Heart right ventricle (tissue), 16 donors: ENCODE measurements at regions of chr22 and their contacts with region 1.

Region 1: DNA sequence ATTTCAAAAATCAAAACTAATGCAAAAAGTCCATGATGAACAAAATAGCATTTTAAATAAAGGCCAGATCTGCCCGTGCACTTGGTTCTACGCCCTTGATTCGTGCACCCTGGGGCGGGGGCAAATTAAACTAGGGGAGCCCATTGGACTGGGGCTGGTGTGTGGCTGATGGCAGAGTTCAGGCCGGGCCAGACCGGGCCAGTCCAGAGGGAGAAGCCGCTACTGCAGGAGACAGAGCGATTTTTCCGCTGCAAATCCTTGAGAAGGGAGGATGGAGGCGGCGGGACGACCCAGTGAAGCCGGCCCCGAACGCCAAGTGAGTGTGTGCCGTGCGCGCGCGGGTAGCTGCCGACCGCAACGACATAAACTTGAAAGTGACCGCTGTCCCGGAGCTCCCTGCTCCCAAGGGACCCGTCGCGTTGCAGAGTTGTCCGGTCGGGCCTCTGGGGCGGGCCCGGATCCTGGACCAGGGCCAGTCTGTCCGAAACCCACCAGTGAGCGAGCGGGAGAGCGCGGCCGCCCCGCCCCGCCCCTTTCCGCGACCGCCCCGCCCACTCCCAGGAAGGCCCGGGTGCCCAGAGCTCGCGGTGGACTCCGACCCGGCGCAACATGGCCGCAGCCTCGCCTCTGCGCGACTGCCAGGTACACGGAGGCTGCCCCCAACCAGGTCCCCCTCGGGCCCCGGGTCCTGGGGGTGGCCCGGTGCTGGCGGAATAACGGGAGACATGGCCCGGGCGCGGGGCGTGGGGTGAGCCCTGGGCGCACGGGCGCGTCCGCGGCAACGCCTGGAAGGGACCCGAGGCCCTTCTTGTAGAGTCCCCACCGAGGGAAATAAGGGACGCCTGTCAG is at the start of gene TTC38:
- DNase-seq: peak; percentile 96
- ATAC-seq: peak; percentile 97 to 99 (median 98)
- H3K4me3 ChIP-seq: peak within 1 kb of the TSS; percentile 30 to 95 (median 82)
- H3K27ac ChIP-seq: peak within 1 kb of the TSS; percentile 72 to 95 (median 88)
- H3K4me1 ChIP-seq: peaks cover 0 to 39% (median 29%) of the 10 kb centered on the region in 9 donors
- H3K27me3 ChIP-seq: no peaks in the 10 kb centered on the region
- CTCF ChIP-seq: no peak
- total RNA-seq, gene TTC38: 20.5 to 29.2 (median 26.1) TPM

Region 2: GRCh38 chr22:46250035-46250782 is 17.4 kb before region 1 on chr22 and contains the start of gene CDPF1:
- intact Hi-C with region 1: loop called in 1 of 10 experiments (anchors 2 kb)
- DNase-seq: peak; percentile 93 to 94
- ATAC-seq: peak; percentile 92 to 97 (median 94)
- H3K4me3 ChIP-seq: peak within 1 kb of the TSS; percentile 48 to 93 (median 81)
- H3K27ac ChIP-seq: peak within 1 kb of the TSS; percentile 84 to 96 (median 94)
- H3K4me1 ChIP-seq: peaks cover 13 to 58% (median 43%) of the 10 kb centered on the region in 9 donors
- H3K27me3 ChIP-seq: no peaks in the 10 kb centered on the region
- CTCF ChIP-seq: no peak
- total RNA-seq, gene CDPF1: 6.3 to 10.4 (median 7.5) TPM

Region 3: DNA sequence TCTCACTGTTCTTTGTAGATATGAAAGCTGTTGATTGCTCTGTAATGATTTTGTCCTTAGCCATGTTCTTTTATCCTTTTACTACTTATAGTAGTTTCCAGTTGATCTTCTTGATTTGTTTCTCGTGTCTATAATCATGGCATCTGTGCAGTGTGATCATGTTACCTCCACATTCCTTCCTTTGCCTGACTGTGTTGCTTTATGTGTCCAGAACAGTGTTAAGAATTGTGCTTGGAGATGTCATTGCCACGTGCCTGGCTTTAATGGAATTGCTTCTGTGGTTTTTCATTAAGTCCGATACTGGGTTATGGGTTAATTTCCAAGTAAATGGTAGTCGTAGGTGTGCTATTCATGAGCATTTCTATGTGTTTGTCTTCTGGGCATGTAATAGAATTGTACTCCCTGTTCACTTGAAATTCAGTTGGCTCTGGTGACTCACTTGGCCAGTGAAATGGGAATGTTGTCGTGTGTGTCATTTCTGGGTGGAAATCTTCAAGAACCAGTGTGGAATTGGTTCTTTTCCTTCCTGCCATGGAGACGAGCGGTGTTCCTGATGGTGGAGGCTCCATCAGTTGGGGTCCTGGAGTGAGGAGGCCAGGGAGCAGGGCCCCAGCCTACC is 35.8 kb after region 1 on chr22:
- intact Hi-C with region 1: loop called in 1 of 10 experiments (anchors 5 kb)
- DNase-seq: no peak
- ATAC-seq: no peak
- H3K4me3 ChIP-seq: no peak overlapping the region
- H3K27ac ChIP-seq: no peak overlapping the region
- H3K4me1 ChIP-seq: peaks cover 0 to 4% (median 0%) of the 10 kb centered on the region in 9 donors
- H3K27me3 ChIP-seq: no peaks in the 10 kb centered on the region
- CTCF ChIP-seq: no peak